ENCODE measurements at regions of chr5 and their contacts with region 1.

Region 1: DNA sequence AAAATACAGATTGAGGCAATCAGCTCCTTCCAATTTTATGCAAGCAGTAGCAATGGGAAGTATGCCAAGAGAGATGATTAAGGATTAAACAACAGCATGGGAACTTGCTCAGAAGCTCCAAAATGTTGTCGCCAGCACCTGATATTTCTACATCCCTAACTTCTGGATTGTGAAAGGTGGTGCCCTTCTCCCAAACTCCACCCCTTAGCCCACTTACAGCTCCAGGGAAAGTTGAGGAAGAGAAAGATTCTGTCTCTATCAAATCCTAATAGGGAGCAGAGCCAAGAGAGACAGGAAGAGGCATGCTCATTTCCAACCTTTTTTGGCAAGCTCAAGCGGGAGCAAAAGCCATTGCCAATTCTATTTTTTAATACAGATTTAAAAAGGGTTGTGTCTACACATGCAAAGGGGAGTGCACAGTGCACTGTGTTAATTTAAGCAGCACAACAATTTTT is 92.4 kb upstream of the NR3C1 start:
- DNase-seq: peak in 1 of 3 donors; percentile 57
- ATAC-seq: peak; percentile 64 to 78 (median 72)
- H3K4me3 ChIP-seq: peak overlapping the region in 1 of 3 donors; percentile 4
- H3K27ac ChIP-seq: peak overlapping the region; percentile 11 to 73 (median 29)
- H3K4me1 ChIP-seq: peaks cover 0 to 45% (median 19%) of the 10 kb centered on the region in 4 donors
- H3K27me3 ChIP-seq: no peaks in the 10 kb centered on the region
- CTCF ChIP-seq: no peak
- POLR2A ChIP-seq: no peak

Region 2: GRCh38 chr5:143403593-143404415 is 92.0 kb before region 1 on chr5 and contains the start of gene NR3C1:
- intact Hi-C with region 1: loop called in 1 of 2 experiments (anchors 10 kb)
- DNase-seq: peak; percentile 93 to 95 (median 93)
- ATAC-seq: peak; percentile 68 to 87 (median 76)
- H3K4me3 ChIP-seq: peak within 1 kb of the TSS; percentile 81 to 93 (median 88)
- H3K27ac ChIP-seq: peak within 1 kb of the TSS; percentile 97 to 99 (median 98)
- H3K4me1 ChIP-seq: peaks cover 0 to 21% (median 10%) of the 10 kb centered on the region in 4 donors
- H3K27me3 ChIP-seq: no peaks in the 10 kb centered on the region
- CTCF ChIP-seq: peak; percentile 51 to 82 (median 56)
- POLR2A ChIP-seq: peak; percentile 73
- total RNA-seq, gene NR3C1: 27.3 to 60.1 (median 47.2) TPM

Measured in right lobe of liver (tissue), 6 donors.